ENCODE measurements at regions of chr16 and their contacts with region 1.

Region 1: DNA sequence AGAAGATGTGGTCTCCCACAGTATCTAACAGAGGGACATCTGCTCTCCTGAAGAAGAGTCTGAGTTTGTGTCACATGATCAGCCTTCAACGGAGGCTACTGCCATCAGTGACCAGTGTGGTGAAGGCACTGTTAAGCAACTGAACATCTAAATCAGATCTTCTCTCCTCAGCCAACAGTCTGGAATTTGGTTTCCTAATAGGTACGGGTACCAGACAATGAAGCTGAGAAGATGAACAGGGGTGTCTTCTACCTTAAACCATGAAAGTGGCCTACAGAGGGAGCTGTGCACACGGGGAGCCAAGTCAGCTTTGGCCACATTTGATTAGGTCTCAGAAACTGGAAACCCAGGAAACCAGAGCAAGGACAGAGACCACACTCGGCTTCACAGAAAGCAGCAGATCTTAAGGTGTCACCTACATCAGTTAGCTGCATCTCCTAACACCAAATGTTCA is 41.8 kb downstream of the BRD7 start:
- DNase-seq: peak; percentile 61
- H3K4me3 Mint-ChIP-seq: no peak overlapping the region
- H3K27ac Mint-ChIP-seq: peak overlapping the region; percentile 70
- H3K4me1 Mint-ChIP-seq: peaks cover 37% of the 10 kb centered on the region
- H3K27me3 Mint-ChIP-seq: no peaks in the 10 kb centered on the region

Region 2: DNA sequence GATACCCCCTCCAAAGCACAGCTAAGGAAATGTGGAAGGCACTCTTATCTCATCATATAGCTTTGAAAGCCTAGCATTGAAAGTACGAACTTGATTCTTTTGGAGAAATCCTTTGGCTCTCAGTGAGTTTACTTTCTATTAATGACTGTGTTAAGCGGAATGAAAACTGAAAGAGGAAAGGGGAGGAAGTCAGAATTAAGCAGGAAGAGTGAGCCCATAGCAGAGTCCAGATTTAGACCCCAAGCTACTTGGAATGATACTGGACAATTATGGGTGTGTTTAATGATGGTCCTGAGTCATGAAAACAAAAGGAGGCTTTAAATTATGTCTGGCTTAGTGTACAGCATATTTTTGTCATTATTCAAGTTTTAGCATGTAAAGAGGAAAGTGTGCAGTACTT is 131.7 kb before region 1 on chr16:
- intact Hi-C with region 1: no loop called
- DNase-seq: no peak
- H3K4me3 Mint-ChIP-seq: no peak overlapping the region
- H3K27ac Mint-ChIP-seq: no peak overlapping the region
- H3K4me1 Mint-ChIP-seq: peaks cover 31% of the 10 kb centered on the region
- H3K27me3 Mint-ChIP-seq: no peaks in the 10 kb centered on the region

Region 3: DNA sequence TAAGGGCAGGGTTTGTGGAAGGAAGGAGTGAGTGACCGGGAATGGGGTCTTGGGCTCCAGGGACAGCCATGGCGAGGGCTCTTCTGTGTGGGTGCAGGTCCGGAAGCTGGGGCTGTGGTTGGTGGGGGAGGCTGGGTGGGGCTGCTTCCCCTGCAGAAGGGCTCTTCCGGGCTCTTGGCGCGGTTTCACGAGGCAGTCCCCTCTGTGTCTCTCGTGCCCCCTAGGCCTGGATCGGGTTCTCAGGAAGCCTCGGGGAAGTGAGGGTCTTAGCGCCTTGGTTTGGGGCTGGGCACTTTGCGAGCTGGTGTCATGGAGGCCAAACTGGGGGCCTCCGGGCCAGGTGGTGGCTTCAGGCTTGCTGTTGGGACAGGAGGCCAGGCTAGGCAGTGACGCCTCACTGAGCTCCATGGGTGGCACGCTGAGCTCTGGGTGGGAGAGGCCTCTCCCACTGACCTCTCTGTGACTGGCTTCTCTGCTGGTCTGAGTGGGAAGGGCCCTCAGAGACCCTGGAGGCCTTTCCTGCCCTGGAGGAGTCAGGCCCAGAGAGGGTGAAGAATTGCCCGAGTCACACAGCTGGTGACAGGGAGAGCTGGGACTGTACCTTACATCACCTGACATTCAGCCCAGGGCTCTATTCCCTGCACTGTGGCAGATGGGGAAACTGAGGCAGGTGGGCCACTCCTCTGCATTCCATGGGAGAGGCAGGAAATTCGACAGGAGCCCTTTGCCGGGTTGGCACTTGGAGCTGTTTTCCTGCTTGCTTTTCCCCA is 52.5 kb before region 1 on chr16:
- intact Hi-C with region 1: loop called (anchors 2 kb)
- DNase-seq: peak; percentile 43
- H3K4me3 Mint-ChIP-seq: peak overlapping the region; percentile 92
- H3K27ac Mint-ChIP-seq: peak overlapping the region; percentile 98
- H3K4me1 Mint-ChIP-seq: peaks cover 63% of the 10 kb centered on the region
- H3K27me3 Mint-ChIP-seq: no peaks in the 10 kb centered on the region

Region 4: GRCh38 chr16:50313596-50314478 is 13.1 kb before region 1 on chr16:
- intact Hi-C with region 1: no loop called
- DNase-seq: peak; percentile 54
- H3K4me3 Mint-ChIP-seq: peak overlapping the region; percentile 49
- H3K27ac Mint-ChIP-seq: peak overlapping the region; percentile 86
- H3K4me1 Mint-ChIP-seq: peaks cover 20% of the 10 kb centered on the region
- H3K27me3 Mint-ChIP-seq: no peaks in the 10 kb centered on the region

Region 5: GRCh38 chr16:50354629-50355456 is 27.9 kb after region 1 on chr16:
- intact Hi-C with region 1: loop called (anchors 1 kb)
- DNase-seq: no peak
- H3K4me3 Mint-ChIP-seq: no peak overlapping the region
- H3K27ac Mint-ChIP-seq: peak overlapping the region; percentile 47
- H3K4me1 Mint-ChIP-seq: peaks cover 17% of the 10 kb centered on the region
- H3K27me3 Mint-ChIP-seq: no peaks in the 10 kb centered on the region

Region 6: DNA sequence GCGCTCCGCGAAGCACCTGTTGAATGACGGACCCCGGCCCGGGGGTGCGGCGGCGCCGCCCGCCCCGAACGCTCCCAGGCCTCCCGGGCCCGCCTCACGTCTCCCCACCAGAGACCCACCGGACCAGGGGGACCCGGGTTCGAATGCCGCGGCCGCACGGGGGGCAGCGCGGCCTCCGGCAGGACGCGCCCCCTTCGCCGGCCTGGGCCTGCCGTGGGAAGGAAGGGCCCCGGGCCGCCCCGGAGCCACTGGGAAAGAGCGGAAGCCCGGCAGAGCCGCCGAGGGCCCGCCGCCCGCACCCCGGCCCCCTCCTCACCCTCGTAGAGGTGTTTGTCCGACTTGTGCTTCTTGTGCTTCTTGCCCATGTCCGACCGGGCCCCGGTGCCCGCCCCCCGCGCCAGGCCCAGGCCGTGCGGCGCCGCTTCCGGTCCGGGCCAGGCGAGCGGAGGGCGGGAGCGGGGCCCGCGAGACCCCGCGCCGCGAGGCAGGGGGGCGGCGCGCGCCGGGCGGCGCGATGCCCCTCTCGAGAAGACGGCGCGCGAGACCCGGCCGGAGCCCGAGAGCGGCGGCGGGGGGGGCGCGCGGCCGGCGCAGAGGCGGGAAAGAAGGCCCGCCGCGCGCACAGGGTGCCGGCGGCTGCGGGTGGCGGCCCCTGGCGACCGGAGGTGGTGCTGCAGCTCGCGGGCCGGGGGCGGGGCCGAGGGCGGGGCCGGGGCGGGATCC is 41.6 kb after region 1 on chr16 and contains the start of gene BRD7:
- intact Hi-C with region 1: loop called (anchors 5 kb)
- DNase-seq: peak; percentile 59
- H3K4me3 Mint-ChIP-seq: peak within 1 kb of the TSS; percentile 99
- H3K27ac Mint-ChIP-seq: peak within 1 kb of the TSS; percentile 94
- H3K4me1 Mint-ChIP-seq: peaks cover 40% of the 10 kb centered on the region
- H3K27me3 Mint-ChIP-seq: no peaks in the 10 kb centered on the region
- total RNA-seq, gene BRD7: 76.0 and 79.5 TPM in 2 replicates

Measured in activated T-helper 2 cell treated with anti-CD3 and anti-CD28 coated beads, Interferon-gamma antibody, Interleukin-2, Interleukin-4, amounts not matched to agents 10 μg/mL and 5 μg/mL and 100 μg/mL, durations not matched to agents 14 hours and 24 hours and 36 hours (primary cell).